ENCODE measurements at regions of chr10 and their contacts with region 1.

Region 1: DNA sequence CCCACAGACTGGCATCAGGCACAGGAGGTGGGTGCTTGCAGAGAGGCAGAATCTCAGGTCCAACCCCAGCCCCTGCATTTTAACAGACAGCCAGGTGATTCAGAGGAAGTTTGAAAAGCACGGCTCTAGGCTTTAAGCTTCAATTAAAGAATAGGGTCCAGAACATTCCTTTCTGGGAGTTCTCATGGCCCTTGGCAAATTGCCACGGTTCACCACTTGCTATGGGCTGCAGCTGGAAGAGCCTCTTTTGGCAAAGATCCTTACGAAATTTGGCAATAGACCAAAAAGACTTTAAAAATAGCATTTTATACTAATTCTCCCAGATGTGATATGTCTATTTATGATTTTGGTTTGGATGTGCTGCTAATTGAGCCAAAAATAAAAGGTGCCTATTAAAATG is 148.1 kb downstream of the ITGA8 start:
- DNase-seq: peak; percentile 58 to 73 (median 66)
- ATAC-seq: peak in 2 of 4 donors; percentile 38 to 50
- H3K4me3 ChIP-seq: no peak overlapping the region
- H3K27ac ChIP-seq: no peak overlapping the region
- H3K4me1 ChIP-seq: peaks cover 0 to 15% (median 9%) of the 10 kb centered on the region in 12 donors
- H3K27me3 ChIP-seq: no peaks in the 10 kb centered on the region
- CTCF ChIP-seq: no peak
- POLR2A ChIP-seq: no peak

Region 2: GRCh38 chr10:15461353-15462108 is 110.0 kb before region 1 on chr10:
- intact Hi-C with region 1: loop called in 1 of 10 experiments (anchors 10 kb)
- DNase-seq: peak in 3 of 5 donors; percentile 15 to 42 (median 26)
- ATAC-seq: peak in 3 of 4 donors; percentile 71 to 81 (median 73)
- H3K4me3 ChIP-seq: no peak overlapping the region
- H3K27ac ChIP-seq: no peak overlapping the region
- H3K4me1 ChIP-seq: peaks cover 0 to 11% (median 0%) of the 10 kb centered on the region in 12 donors
- H3K27me3 ChIP-seq: peaks cover 0 to 7% (median 0%) of the 10 kb centered on the region in 9 donors
- CTCF ChIP-seq: peak in 3 of 12 donors; percentile 6 to 13 (median 11)
- POLR2A ChIP-seq: no peak

Region 3: GRCh38 chr10:15515202-15515601 is 56.4 kb before region 1 on chr10:
- intact Hi-C with region 1: loop called in 1 of 10 experiments (anchors 10 kb)
- DNase-seq: no peak
- ATAC-seq: no peak
- H3K4me3 ChIP-seq: no peak overlapping the region
- H3K27ac ChIP-seq: no peak overlapping the region
- H3K4me1 ChIP-seq: no peaks in the 10 kb centered on the region
- H3K27me3 ChIP-seq: no peaks in the 10 kb centered on the region
- CTCF ChIP-seq: no peak
- POLR2A ChIP-seq: no peak

Region 4: GRCh38 chr10:15585303-15585715 is 13.7 kb after region 1 on chr10:
- intact Hi-C with region 1: no loop called
- DNase-seq: peak; percentile 41 to 72 (median 51)
- ATAC-seq: peak in 3 of 4 donors; percentile 61 to 82 (median 73)
- H3K4me3 ChIP-seq: no peak overlapping the region
- H3K27ac ChIP-seq: no peak overlapping the region
- H3K4me1 ChIP-seq: peaks cover 0 to 8% (median 0%) of the 10 kb centered on the region in 12 donors
- H3K27me3 ChIP-seq: no peaks in the 10 kb centered on the region
- CTCF ChIP-seq: peak; percentile 50 to 87 (median 76)
- POLR2A ChIP-seq: no peak

Measured in heart left ventricle (tissue), 16 donors.